Calu3 (cell line): ENCODE measurements at regions of chr20 and their contacts with region 1.

Region 1: DNA sequence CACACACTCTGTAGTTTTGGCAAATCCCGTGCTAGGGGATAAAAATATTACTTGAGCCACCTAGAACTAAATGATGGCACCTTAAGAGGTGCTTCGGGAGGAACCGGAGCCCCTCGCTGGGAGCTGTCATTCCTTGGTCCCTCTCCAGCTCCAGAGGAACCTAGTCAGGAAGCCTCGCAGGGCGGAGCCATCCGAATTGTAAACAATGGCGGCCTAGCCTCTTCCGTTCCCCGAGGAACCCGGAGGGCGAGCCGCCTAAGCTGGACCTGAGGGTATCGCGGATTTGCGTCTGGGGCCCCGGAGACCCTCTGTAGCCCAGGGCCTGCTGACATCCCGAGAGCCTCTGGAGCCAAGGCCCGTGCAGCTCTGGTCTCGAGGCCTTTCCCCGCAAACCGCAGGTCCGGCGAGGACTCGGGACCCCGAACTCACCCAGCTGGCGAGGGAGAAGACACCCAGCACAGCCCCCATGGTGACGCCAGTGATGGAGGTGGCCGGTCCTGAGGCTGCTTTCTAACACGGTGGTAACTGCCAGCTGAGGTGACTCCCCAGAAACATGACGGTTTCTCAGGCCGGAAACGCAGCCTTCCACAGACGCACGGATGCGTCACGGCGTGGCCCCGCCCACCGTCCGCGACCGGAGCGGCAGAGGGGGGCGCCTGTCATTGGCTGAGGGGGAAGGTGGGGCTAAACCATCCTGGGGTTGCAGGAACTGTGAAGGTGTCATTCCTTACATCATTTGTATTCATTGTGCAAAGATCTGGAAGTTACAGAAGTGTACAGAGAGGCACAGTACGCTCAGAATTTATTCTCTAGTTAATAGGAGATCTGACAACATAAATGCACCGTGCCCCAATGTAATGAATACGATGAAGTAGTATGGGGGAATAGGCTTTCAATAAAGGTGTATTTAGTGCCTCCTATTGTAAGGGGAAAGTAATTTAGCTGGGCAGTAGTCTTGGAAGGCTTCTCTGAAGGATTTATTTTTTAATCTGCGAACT is at the start of gene SERINC3:
- DNase-seq: peak; percentile 99
- H3K4me3 Mint-ChIP-seq: peak within 1 kb of the TSS; percentile 91
- H3K27ac Mint-ChIP-seq: peak within 1 kb of the TSS; percentile 85
- H3K4me1 Mint-ChIP-seq: peaks cover 45% of the 10 kb centered on the region
- H3K27me3 Mint-ChIP-seq: peaks cover 12% of the 10 kb centered on the region
- CTCF ChIP-seq: no peak
- total RNA-seq, gene SERINC3: 159 and 173 TPM in 2 replicates

Region 2: GRCh38 chr20:44609511-44610312 is 87.9 kb after region 1 on chr20:
- CTCF ChIA-PET with region 1: interaction called, 3 read pairs
- intact Hi-C with region 1: loop called (anchors 5 kb)
- DNase-seq: peak; percentile 97
- H3K4me3 Mint-ChIP-seq: peak overlapping the region; percentile 52
- H3K27ac Mint-ChIP-seq: no peak overlapping the region
- H3K4me1 Mint-ChIP-seq: peaks cover 17% of the 10 kb centered on the region
- H3K27me3 Mint-ChIP-seq: no peaks in the 10 kb centered on the region
- CTCF ChIP-seq: peak; percentile 99

Region 3: DNA sequence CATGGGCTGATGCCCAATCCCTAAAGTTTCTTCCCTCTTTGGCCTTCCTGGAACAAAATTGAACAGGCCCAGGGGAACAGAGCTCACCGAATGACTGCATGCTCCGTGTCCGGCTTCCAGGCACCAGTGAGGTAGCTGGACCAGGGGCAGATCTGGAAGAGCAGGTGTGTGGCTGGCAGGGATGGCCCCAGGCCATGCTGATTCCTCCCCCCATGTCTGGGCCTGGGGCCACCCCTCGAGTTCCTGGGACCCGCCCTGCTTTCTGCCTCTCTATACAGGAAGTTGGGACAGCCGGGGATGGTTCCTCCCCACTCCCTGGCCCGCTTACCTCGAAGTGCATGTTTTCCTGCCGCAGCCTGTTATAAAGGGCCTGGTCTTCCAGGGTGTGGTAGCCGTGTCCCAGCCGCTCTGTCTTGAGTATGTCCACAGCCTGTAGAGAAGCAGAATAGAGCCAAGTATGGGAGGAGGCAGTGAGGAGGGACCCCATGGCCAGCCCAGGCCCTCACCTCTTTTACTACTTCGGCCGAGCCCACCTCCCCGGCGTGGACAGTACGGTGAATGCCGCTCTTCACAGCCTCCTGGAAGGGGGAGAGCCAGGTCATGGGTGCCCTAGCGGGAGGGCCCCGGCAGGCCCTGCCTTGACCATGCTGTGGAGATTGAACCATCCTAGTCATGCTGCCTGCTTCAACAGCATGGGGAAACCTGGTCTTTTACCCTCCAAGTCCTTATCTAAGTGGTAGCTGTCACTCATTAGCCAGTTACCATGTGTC is 100.9 kb after region 1 on chr20:
- CTCF ChIA-PET with region 1: no interaction called
- intact Hi-C with region 1: no loop called
- DNase-seq: no peak
- H3K4me3 Mint-ChIP-seq: no peak overlapping the region
- H3K27ac Mint-ChIP-seq: no peak overlapping the region
- H3K4me1 Mint-ChIP-seq: peaks cover 9% of the 10 kb centered on the region
- H3K27me3 Mint-ChIP-seq: no peaks in the 10 kb centered on the region
- CTCF ChIP-seq: no peak